HCT116 (cell line): ENCODE measurements at regions of chr2 and their contacts with region 1.

Region 1: GRCh38 chr2:200713003-200713703 is 98.6 kb upstream of the BZW1 start:
- DNase-seq: peak; percentile 98
- ATAC-seq: peak; percentile 99
- H3K4me3 ChIP-seq: peak overlapping the region; percentile 21 to 32
- H3K27ac ChIP-seq: peak overlapping the region; percentile 71
- H3K4me1 ChIP-seq: peaks cover 9 to 18% of the 10 kb centered on the region in 2 experiments
- H3K27me3 ChIP-seq: no peaks in the 10 kb centered on the region
- CTCF ChIP-seq: peak; percentile 79 to 95 (median 89)
- POLR2A ChIP-seq: peak; percentile 84
- RAD21 ChIP-seq: peak; percentile 100

Region 2: DNA sequence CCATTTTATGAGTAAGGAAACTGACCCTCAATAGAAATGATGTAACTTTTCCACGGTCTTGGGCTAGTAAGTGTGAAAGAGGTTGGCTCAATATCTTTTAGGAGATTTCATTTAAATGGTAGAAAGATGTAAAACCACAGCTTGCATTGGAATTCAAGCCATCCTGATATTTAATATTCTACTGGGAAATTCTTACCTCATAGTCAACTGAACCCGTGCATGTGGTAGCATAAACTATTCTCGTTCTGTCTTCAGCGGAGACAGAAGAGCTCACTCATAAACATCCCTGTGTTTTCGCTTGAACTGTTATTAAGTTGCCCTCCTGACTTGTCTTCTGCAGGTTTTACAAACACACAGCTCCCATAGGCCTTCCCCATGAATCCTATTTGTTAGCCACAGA is 415.2 kb before region 1 on chr2:
- CTCF ChIA-PET with region 1: no interaction called
- POLR2A ChIA-PET with region 1: no interaction called
- RAD21 ChIA-PET with region 1: no interaction called
- intact Hi-C with region 1: no loop called
- DNase-seq: no peak
- ATAC-seq: no peak
- H3K4me3 ChIP-seq: no peak overlapping the region
- H3K27ac ChIP-seq: no peak overlapping the region
- H3K4me1 ChIP-seq: peaks cover 26 to 31% of the 10 kb centered on the region in 2 experiments
- H3K27me3 ChIP-seq: no peaks in the 10 kb centered on the region
- CTCF ChIP-seq: no peak
- POLR2A ChIP-seq: no peak
- RAD21 ChIP-seq: no peak

Region 3: GRCh38 chr2:200765139-200765951 is 52.2 kb after region 1 on chr2:
- CTCF ChIA-PET with region 1: interaction called, 3 read pairs
- POLR2A ChIA-PET with region 1: no interaction called
- RAD21 ChIA-PET with region 1: interaction called in 1 of 2 experiments, 4 read pairs
- intact Hi-C with region 1: loop called (anchors 2 kb)
- DNase-seq: peak; percentile 88
- ATAC-seq: peak; percentile 71
- H3K4me3 ChIP-seq: peak overlapping the region; percentile 27 to 54
- H3K27ac ChIP-seq: peak overlapping the region; percentile 75
- H3K4me1 ChIP-seq: peaks cover 42 to 76% of the 10 kb centered on the region in 2 experiments
- H3K27me3 ChIP-seq: no peaks in the 10 kb centered on the region
- CTCF ChIP-seq: no peak
- POLR2A ChIP-seq: no peak
- RAD21 ChIP-seq: peak; percentile 51

Region 4: GRCh38 chr2:200864176-200864976 is 151.2 kb after region 1 on chr2 and contains the start of gene CLK1:
- CTCF ChIA-PET with region 1: no interaction called
- POLR2A ChIA-PET with region 1: interaction called, 3 read pairs
- RAD21 ChIA-PET with region 1: no interaction called
- intact Hi-C with region 1: loop called (anchors 2 kb)
- DNase-seq: peak; percentile 79
- ATAC-seq: peak; percentile 90
- H3K4me3 ChIP-seq: peak within 1 kb of the TSS; percentile 90 to 96
- H3K27ac ChIP-seq: peak within 1 kb of the TSS; percentile 97
- H3K4me1 ChIP-seq: peaks cover 6 to 23% of the 10 kb centered on the region in 2 experiments; a peak in 3 of 4 replicates
- H3K27me3 ChIP-seq: no peaks in the 10 kb centered on the region
- CTCF ChIP-seq: no peak
- POLR2A ChIP-seq: peak; percentile 95
- RAD21 ChIP-seq: no peak
- total RNA-seq, gene CLK1: 49.1 TPM

Region 5: DNA sequence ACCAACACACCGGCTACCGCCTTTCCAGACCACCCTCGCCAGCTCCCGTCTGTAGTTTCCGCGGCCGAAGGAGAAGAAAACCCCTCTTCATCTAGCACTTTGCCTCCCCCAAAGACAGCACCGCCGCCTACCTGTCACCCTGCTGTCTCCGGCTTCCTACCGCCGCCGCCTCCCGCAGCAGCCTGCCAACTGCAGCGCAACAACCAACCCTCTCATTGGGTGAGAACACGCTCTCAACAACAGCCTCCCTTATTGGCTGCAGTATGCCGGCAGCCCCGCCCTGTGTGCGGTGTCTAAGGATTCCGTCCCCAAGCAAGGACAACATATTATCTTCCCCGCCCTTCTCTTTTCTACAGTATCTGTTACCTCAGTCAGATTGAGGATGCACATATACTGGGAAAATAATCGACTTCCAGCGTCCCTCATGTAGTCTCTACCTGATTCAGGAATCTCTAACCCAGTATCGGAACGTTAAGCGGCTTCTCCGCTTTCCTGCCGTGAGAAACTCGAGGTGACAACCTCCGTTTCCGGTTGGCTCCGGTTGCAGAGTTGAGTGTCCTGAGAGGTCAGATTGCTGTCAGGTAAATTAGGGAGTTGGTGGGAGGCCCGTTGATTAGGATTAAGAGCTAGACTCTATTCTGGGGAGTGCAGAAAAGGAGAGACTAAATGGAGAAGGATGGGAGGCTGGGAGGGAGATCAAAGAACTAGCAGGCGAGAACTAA is 358.5 kb after region 1 on chr2 and contains the starts of genes HYCC2 and NDUFB3:
- CTCF ChIA-PET with region 1: interaction called, 7 read pairs
- POLR2A ChIA-PET with region 1: no interaction called
- RAD21 ChIA-PET with region 1: no interaction called
- intact Hi-C with region 1: loop called (anchors 5 kb)
- DNase-seq: peak; percentile 92
- ATAC-seq: peak; percentile 94
- H3K4me3 ChIP-seq: peak within 1 kb of the TSS; percentile 77 to 93
- H3K27ac ChIP-seq: peak within 1 kb of the TSS; percentile 64
- H3K4me1 ChIP-seq: peaks cover 4 to 18% of the 10 kb centered on the region in 2 experiments; a peak in 3 of 4 replicates
- H3K27me3 ChIP-seq: no peaks in the 10 kb centered on the region
- CTCF ChIP-seq: 0 out of 6 replicates have a peak, but pooled peaks of 2 of the 3 experiments have one; percentile 10 to 11
- POLR2A ChIP-seq: peak; percentile 77
- RAD21 ChIP-seq: no peak
- total RNA-seq, gene HYCC2: 9.9 TPM
- total RNA-seq, gene NDUFB3: 94.6 TPM

Region 6: DNA sequence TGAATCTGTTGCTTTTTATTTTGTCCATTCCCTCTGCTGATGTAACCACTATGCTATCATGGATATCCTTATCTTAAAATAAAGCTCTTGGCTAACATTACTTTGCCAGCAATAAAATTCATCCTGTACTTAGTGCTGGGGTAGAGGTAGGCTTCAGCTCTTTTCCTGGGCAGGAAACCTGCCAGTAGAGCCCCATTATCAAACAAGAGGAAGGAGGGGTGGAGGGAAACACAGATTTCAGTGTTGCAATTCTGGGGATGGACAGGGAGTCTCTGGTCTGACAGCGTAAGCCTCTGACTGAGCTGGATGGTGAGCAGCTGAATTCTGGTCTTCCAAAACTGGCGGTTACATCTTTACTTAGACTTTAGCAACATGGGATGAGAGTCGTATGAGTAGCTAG is 594.7 kb after region 1 on chr2:
- CTCF ChIA-PET with region 1: no interaction called
- POLR2A ChIA-PET with region 1: no interaction called
- RAD21 ChIA-PET with region 1: no interaction called
- intact Hi-C with region 1: no loop called
- DNase-seq: no peak
- ATAC-seq: no peak
- H3K4me3 ChIP-seq: no peak overlapping the region
- H3K27ac ChIP-seq: no peak overlapping the region
- H3K4me1 ChIP-seq: no peaks in the 10 kb centered on the region
- H3K27me3 ChIP-seq: no peaks in the 10 kb centered on the region
- CTCF ChIP-seq: no peak
- POLR2A ChIP-seq: no peak
- RAD21 ChIP-seq: no peak